ENCODE measurements at regions of chr15 and their contacts with region 1.

Region 1: DNA sequence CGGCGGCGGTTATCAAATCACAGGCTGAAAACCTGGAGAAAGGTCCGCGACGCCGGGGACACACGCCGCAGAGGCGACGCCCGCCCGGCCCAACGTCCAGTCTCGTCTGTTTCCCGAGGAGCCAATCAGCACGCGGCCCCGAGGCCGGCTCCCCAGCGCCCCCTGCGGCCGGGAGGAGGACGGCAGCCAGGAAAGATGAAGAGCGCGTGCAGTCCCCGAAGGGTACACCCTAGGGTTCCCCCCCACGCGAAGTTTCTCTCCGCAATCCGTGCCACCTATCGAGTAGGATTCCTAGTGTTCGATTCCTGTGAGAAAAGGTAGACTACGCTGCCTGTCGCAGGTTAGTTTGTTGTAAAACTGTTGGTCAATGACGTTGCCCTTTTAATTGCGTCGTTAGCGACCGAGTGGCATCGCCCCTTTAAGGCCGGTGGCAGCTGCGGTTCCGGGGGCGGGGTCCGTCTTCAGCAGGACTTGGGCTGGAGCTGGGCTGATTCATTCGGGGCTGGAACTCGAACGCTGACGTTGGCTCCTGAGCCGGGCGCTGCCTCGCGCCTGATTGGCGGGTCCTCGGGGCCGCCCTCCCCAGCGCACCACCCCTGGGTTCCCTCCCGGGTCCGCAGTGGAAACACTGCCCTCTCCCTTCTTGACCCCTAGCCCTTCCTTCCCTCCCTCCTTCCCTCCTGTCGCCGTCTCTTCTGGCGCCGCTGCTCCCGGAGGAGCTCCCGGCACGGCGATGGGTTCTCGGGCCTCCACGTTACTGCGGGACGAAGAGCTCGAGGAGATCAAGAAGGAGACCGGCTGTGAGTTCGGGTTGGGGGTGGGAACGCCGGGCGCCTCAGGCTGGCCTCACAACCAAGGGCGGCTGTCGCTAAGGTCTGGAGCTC is at the starts of genes CHP1 and EXD1:
- DNase-seq: peak; percentile 99 to 100
- ATAC-seq: peak; percentile 98 to 99 (median 98)
- H3K4me3 ChIP-seq: peak within 1 kb of the TSS; percentile 83
- H3K27ac ChIP-seq: peak within 1 kb of the TSS; percentile 91
- H3K4me1 ChIP-seq: peaks cover 24% of the 10 kb centered on the region
- H3K27me3 ChIP-seq: no peaks in the 10 kb centered on the region
- CTCF ChIP-seq: peak; percentile 86
- total RNA-seq, gene CHP1: 103 to 194 (median 137) TPM
- total RNA-seq, gene EXD1: not detected

Region 2: GRCh38 chr15:40999190-40999589 is 231.7 kb before region 1 on chr15:
- intact Hi-C with region 1: no loop called
- DNase-seq: no peak
- ATAC-seq: no peak
- H3K4me3 ChIP-seq: no peak overlapping the region
- H3K27ac ChIP-seq: no peak overlapping the region
- H3K4me1 ChIP-seq: peaks cover 9% of the 10 kb centered on the region
- H3K27me3 ChIP-seq: no peaks in the 10 kb centered on the region
- CTCF ChIP-seq: no peak

Region 3: DNA sequence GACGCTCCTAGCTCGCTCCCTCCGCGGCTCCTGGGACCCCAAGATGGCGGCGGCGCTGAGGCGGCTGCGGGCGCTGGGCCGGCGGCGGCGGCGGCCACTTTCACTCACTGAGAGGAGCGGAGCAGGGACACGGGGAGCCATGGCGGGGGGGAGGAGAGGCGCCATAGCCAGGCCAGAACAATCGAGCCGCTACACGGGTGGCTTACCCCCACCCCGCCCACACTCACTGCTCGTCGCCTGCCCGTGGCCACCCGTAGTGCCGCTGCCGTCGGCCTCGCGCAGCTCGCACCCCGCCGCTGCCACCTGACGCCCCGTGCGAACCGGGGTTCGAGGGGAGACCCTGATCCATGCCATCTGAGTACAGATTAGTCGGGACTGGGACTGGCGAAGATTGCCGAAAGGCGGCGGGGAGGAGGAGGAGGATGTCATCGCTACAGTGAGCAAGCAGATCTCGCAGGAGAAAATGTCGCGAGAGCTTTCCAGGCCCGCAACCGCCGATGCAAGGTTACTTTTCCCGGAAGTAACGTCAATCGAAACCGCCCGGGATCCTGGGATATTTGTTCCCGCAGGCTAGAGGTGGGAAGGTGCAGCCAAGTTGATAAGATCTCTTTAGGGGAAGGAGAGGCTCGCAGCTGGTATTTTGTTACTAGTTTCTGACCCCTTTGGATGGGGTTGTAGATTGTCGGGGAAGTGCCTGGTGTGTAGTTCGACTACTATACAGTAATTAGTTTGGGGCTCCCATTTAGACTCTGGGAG is 114.6 kb before region 1 on chr15 and contains the start of gene INO80:
- intact Hi-C with region 1: loop called in 1 of 2 experiments (anchors 5 kb)
- DNase-seq: peak; percentile 98 to 99
- ATAC-seq: peak; percentile 92 to 93 (median 92)
- H3K4me3 ChIP-seq: peak within 1 kb of the TSS; percentile 81
- H3K27ac ChIP-seq: peak within 1 kb of the TSS; percentile 97
- H3K4me1 ChIP-seq: peaks cover 22% of the 10 kb centered on the region
- H3K27me3 ChIP-seq: peaks cover 0 to 2% (median 0%) of the 10 kb centered on the region in 3 donors
- CTCF ChIP-seq: no peak
- total RNA-seq, gene INO80: 12.4 to 30.5 (median 22.7) TPM

Region 4: GRCh38 chr15:41169781-41170180 is 61.1 kb before region 1 on chr15:
- intact Hi-C with region 1: no loop called
- DNase-seq: no peak
- ATAC-seq: no peak
- H3K4me3 ChIP-seq: no peak overlapping the region
- H3K27ac ChIP-seq: no peak overlapping the region
- H3K4me1 ChIP-seq: no peaks in the 10 kb centered on the region
- H3K27me3 ChIP-seq: peaks cover 0 to 5% (median 3%) of the 10 kb centered on the region in 3 donors
- CTCF ChIP-seq: no peak

Region 5: GRCh38 chr15:41283653-41284426 is 52.9 kb after region 1 on chr15:
- intact Hi-C with region 1: loop called in 1 of 2 experiments (anchors 5 kb)
- DNase-seq: peak; percentile 98
- ATAC-seq: peak; percentile 99 to 100 (median 99)
- H3K4me3 ChIP-seq: peak overlapping the region; percentile 100
- H3K27ac ChIP-seq: peak overlapping the region; percentile 95
- H3K4me1 ChIP-seq: peaks cover 26% of the 10 kb centered on the region
- H3K27me3 ChIP-seq: no peaks in the 10 kb centered on the region
- CTCF ChIP-seq: no peak

Region 6: GRCh38 chr15:41331833-41332787 is 101.2 kb after region 1 on chr15 and contains the start of gene OIP5:
- intact Hi-C with region 1: loop called in 1 of 2 experiments (anchors 10 kb)
- DNase-seq: peak; percentile 98 to 99
- ATAC-seq: peak; percentile 99 to 100 (median 100)
- H3K4me3 ChIP-seq: peak within 1 kb of the TSS; percentile 84
- H3K27ac ChIP-seq: peak within 1 kb of the TSS; percentile 81
- H3K4me1 ChIP-seq: no peaks in the 10 kb centered on the region
- H3K27me3 ChIP-seq: no peaks in the 10 kb centered on the region
- CTCF ChIP-seq: peak; percentile 78
- total RNA-seq, gene OIP5: 0.89 to 5.4 (median 2.5) TPM